Calu3 (cell line): ENCODE measurements at regions of chr12 and their contacts with region 1.

Region 1: GRCh38 chr12:15151161-15152120 is 69.8 kb downstream of the RERG start:
- DNase-seq: peak; percentile 49
- H3K4me3 Mint-ChIP-seq: no peak overlapping the region
- H3K27ac Mint-ChIP-seq: no peak overlapping the region
- H3K4me1 Mint-ChIP-seq: peaks cover 34% of the 10 kb centered on the region
- H3K27me3 Mint-ChIP-seq: no peaks in the 10 kb centered on the region
- CTCF ChIP-seq: peak; percentile 44

Region 2: GRCh38 chr12:14845350-14845750 is 306.1 kb before region 1 on chr12:
- CTCF ChIA-PET with region 1: no interaction called
- intact Hi-C with region 1: loop called (anchors 10 kb)
- DNase-seq: peak; percentile 50
- H3K4me3 Mint-ChIP-seq: no peak overlapping the region
- H3K27ac Mint-ChIP-seq: peak overlapping the region; percentile 12
- H3K4me1 Mint-ChIP-seq: peaks cover 19% of the 10 kb centered on the region
- H3K27me3 Mint-ChIP-seq: no peaks in the 10 kb centered on the region
- CTCF ChIP-seq: peak; percentile 50

Region 3: GRCh38 chr12:15050659-15051058 is 100.8 kb before region 1 on chr12:
- CTCF ChIA-PET with region 1: no interaction called
- intact Hi-C with region 1: no loop called
- DNase-seq: no peak
- H3K4me3 Mint-ChIP-seq: no peak overlapping the region
- H3K27ac Mint-ChIP-seq: no peak overlapping the region
- H3K4me1 Mint-ChIP-seq: no peaks in the 10 kb centered on the region
- H3K27me3 Mint-ChIP-seq: no peaks in the 10 kb centered on the region
- CTCF ChIP-seq: no peak

Region 4: GRCh38 chr12:15116086-15116485 is 35.4 kb before region 1 on chr12:
- CTCF ChIA-PET with region 1: no interaction called
- intact Hi-C with region 1: no loop called
- DNase-seq: no peak
- H3K4me3 Mint-ChIP-seq: no peak overlapping the region
- H3K27ac Mint-ChIP-seq: no peak overlapping the region
- H3K4me1 Mint-ChIP-seq: no peaks in the 10 kb centered on the region
- H3K27me3 Mint-ChIP-seq: no peaks in the 10 kb centered on the region
- CTCF ChIP-seq: no peak

Region 5: DNA sequence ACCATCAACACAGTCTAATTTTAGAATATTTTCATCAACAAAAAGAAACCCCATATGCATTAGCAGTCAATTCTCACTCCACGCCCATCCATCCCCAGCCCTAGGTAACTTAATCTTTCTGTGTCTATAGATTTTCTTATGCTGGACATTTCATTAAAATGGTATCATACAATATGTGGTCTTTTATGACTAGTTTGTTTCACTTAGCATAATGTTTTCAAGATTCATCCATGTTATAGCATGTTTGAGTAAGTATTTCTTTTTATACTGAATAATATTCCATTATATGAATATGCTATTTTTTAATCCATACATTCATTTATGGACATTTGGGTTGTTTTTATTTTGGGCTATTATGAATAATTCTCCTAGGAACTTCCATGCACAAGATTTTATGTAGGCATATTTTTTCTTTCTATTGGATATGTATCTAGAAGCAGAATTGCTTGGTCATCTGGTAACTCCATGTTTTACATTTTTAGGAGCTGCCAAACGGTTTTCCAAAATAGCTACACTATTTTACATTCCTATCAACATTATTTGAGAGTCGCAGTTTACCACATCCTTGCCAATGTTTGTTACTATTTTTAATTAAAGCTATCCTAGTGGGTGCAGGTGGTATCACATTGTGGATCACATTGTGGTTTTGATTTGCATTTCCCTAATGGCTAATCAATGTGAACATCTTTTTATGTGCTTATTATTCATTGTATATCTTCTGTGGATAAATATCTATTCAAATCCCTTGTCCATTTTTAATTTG is 20.8 kb after region 1 on chr12:
- CTCF ChIA-PET with region 1: no interaction called
- intact Hi-C with region 1: loop called (anchors 2 kb)
- DNase-seq: no peak
- H3K4me3 Mint-ChIP-seq: no peak overlapping the region
- H3K27ac Mint-ChIP-seq: no peak overlapping the region
- H3K4me1 Mint-ChIP-seq: peaks cover 66% of the 10 kb centered on the region
- H3K27me3 Mint-ChIP-seq: no peaks in the 10 kb centered on the region
- CTCF ChIP-seq: no peak

Region 6: GRCh38 chr12:15256766-15257165 is 105.3 kb after region 1 on chr12:
- CTCF ChIA-PET with region 1: no interaction called
- intact Hi-C with region 1: no loop called
- DNase-seq: no peak
- H3K4me3 Mint-ChIP-seq: no peak overlapping the region
- H3K27ac Mint-ChIP-seq: no peak overlapping the region
- H3K4me1 Mint-ChIP-seq: no peaks in the 10 kb centered on the region
- H3K27me3 Mint-ChIP-seq: peaks cover 60% of the 10 kb centered on the region
- CTCF ChIP-seq: no peak

Region 7: GRCh38 chr12:15268927-15269552 is 117.6 kb after region 1 on chr12:
- CTCF ChIA-PET with region 1: no interaction called
- intact Hi-C with region 1: loop called (anchors 1 kb)
- DNase-seq: peak; percentile 52
- H3K4me3 Mint-ChIP-seq: no peak overlapping the region
- H3K27ac Mint-ChIP-seq: no peak overlapping the region
- H3K4me1 Mint-ChIP-seq: peaks cover 6% of the 10 kb centered on the region
- H3K27me3 Mint-ChIP-seq: no peaks in the 10 kb centered on the region
- CTCF ChIP-seq: peak; percentile 65

Region 8: GRCh38 chr12:15322164-15323061 is 171.0 kb after region 1 on chr12 and contains the start of gene PTPRO:
- CTCF ChIA-PET with region 1: no interaction called
- intact Hi-C with region 1: no loop called
- DNase-seq: peak; percentile 50
- H3K4me3 Mint-ChIP-seq: peak within 1 kb of the TSS; percentile 50
- H3K27ac Mint-ChIP-seq: no peak within 1 kb of the TSS
- H3K4me1 Mint-ChIP-seq: no peaks in the 10 kb centered on the region
- H3K27me3 Mint-ChIP-seq: peaks cover 49% of the 10 kb centered on the region
- CTCF ChIP-seq: no peak
- total RNA-seq, gene PTPRO: 0.24 TPM in 1 of 2 replicates, not detected in the other